ENCODE measurements at regions of chr10 and their contacts with region 1.

Region 1: DNA sequence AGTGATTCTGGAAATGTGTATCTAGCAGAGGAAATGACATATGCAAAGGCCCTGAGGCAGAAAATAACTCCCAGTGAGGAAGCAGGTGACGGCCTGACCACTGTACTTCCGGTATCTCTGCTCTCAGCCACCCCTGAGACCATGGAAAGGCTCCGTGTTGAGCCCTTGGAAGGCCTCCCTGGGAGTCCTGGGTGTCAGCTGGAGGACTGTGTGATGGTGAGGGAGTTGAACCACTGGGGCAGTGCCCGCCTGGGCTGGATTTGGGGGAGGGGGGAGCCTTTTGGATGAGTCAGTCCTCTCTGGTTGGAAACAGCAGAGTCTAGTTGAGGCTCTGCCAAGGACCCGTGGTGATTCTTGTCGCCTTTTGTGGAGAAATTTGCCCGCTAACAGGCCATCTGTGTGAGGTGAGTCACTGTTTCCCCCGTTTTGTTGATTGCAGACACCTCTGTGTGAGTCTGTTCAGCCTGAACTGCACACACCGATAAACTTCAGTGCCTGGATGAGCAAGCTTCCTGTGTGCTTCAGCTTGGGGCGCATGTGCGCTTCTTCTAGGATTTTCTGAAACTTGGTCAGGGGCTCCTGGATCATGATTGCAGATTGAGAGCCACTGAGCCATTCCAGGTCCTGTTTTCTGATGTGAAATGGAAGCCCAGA is 98.6 kb downstream of the GRK5 start:
- DNase-seq: peak; percentile 75 to 94
- H3K4me3 ChIP-seq: no peak overlapping the region
- CTCF ChIP-seq: no peak
- POLR2A ChIP-seq: no peak

Region 2: GRCh38 chr10:119245272-119245671 is 60.7 kb before region 1 on chr10:
- intact Hi-C with region 1: loop called (anchors 2 kb)
- DNase-seq: no peak
- H3K4me3 ChIP-seq: no peak overlapping the region
- CTCF ChIP-seq: no peak
- POLR2A ChIP-seq: no peak